ENCODE measurements at regions of chr6 and their contacts with region 1.

Region 1: DNA sequence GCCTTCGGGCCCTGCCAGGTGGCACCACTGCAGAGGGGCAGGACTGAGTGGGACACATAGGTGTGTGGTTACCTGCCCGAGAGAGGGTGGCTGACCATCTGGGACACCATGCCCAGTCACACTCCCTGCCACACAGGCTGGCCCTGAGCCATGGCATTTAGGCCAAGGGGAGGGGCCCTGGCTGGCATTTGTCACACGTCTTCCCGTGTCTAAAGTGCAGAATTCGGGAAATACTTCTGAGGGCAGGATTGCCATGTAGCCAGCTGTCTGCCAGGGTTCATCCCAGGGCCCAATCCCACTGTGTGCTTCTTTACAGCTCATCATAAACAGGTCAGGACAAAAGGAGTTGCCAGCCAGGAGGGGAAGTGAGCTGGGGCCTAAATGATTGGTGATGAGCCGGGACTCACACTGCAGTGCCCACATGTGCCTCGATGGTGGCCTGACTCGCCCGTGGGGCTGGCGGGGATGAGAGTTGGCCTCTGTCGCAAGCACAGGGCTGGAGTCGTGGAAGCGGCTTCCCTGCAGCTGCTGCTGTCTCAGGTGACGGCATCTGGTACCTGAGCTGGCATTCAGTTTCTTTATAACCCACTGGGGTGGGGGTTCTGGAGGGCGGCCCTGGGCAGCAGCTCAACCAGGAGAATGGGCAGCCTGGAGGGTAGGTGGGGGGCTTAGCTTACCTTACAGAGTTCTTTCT is 5.9 kb upstream of the UNC93A start:
- DNase-seq: no peak
- ATAC-seq: no peak
- H3K4me3 Mint-ChIP-seq: no peak overlapping the region
- H3K27ac Mint-ChIP-seq: no peak overlapping the region
- H3K4me1 Mint-ChIP-seq: no peaks in the 10 kb centered on the region
- H3K27me3 Mint-ChIP-seq: no peaks in the 10 kb centered on the region
- CTCF ChIP-seq: no peak

Region 2: GRCh38 chr6:167227984-167228383 is 57.2 kb before region 1 on chr6:
- CTCF ChIA-PET with region 1: no interaction called
- POLR2A ChIA-PET with region 1: no interaction called
- intact Hi-C with region 1: loop called (anchors 5 kb)
- DNase-seq: no peak
- ATAC-seq: no peak
- H3K4me3 Mint-ChIP-seq: no peak overlapping the region
- H3K27ac Mint-ChIP-seq: no peak overlapping the region
- H3K4me1 Mint-ChIP-seq: no peaks in the 10 kb centered on the region
- H3K27me3 Mint-ChIP-seq: peaks cover 21% of the 10 kb centered on the region
- CTCF ChIP-seq: no peak

Region 3: GRCh38 chr6:167268683-167269280 is 16.4 kb before region 1 on chr6:
- CTCF ChIA-PET with region 1: no interaction called
- POLR2A ChIA-PET with region 1: no interaction called
- intact Hi-C with region 1: no loop called
- DNase-seq: no peak
- ATAC-seq: no peak
- H3K4me3 Mint-ChIP-seq: no peak overlapping the region
- H3K27ac Mint-ChIP-seq: no peak overlapping the region
- H3K4me1 Mint-ChIP-seq: no peaks in the 10 kb centered on the region
- H3K27me3 Mint-ChIP-seq: peaks cover 7% of the 10 kb centered on the region
- CTCF ChIP-seq: no peak

Measured in activated CD8-positive, alpha-beta T cell treated with anti-CD3 and anti-CD28 coated beads for 36 hours (primary cell).